ENCODE measurements at regions of chr17 and their contacts with region 1.

Region 1: DNA sequence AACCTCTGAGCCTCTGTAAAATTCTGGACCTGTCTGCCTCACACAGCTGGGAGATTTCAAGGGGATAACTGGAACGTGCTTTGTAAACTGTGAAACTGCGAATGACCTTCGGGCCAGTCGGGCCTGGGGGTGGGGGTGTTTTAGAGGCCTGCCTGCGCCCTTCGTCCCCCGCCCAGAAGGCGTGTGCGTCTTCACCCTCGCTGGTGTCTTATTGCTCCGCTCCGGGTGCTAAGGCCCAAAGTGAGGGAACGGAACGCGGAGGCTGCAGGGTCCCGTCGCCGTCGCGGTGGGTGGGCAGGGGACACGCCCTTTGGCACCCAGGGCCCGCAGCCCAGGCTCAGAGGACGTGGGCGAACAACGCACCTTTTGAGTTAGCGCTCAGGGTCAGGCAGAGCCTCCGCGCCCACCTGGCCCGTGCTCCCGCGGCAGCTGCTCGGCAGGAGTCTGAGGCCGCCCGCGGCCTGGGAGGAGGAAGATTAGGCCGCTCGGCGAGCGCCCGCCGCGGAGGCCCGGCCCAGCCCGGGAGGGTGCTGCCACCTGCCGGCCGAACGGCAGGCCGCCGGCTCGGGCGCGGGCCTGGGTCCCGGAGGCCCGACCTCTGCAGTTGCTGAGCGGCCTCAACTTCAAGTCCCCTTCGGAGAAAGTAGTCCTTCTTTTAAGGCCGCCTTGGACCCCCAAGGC is 29.7 kb downstream of the DCAKD start:
- DNase-seq: peak; percentile 91
- CTCF ChIP-seq: peak; percentile 79

Region 2: GRCh38 chr17:44804302-44805089 is 217.3 kb before region 1 on chr17:
- CTCF ChIA-PET with region 1: no interaction called
- POLR2A ChIA-PET with region 1: no interaction called
- DNase-seq: no peak
- CTCF ChIP-seq: no peak

Region 3: GRCh38 chr17:44911133-44912001 is 110.4 kb before region 1 on chr17:
- CTCF ChIA-PET with region 1: interaction called, 13 read pairs
- POLR2A ChIA-PET with region 1: no interaction called
- DNase-seq: peak; percentile 64
- CTCF ChIP-seq: peak; percentile 70

Region 4: DNA sequence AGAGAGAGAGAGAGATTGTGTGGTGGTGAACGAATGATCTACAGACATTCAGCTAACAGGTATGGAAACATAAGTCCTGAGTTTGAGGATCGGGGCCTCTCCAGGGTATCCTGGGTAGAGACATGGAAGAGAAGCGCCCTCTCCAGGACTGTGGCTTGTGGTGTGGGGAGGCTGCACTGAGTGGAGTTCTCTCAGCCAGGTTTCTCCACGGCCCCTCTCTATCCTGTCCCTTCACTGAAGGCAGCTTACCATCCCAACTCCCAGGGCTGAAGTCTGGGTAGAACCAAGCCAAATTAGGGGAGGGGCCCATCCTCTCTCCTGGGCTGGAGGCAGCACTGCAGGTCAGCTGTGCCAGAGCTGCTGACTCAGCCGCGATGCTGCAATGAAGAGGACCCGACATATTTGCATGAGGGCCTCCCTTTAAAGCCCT is 59.8 kb before region 1 on chr17:
- CTCF ChIA-PET with region 1: interaction called, 11 read pairs
- POLR2A ChIA-PET with region 1: no interaction called
- DNase-seq: no peak
- CTCF ChIP-seq: no peak

Region 5: DNA sequence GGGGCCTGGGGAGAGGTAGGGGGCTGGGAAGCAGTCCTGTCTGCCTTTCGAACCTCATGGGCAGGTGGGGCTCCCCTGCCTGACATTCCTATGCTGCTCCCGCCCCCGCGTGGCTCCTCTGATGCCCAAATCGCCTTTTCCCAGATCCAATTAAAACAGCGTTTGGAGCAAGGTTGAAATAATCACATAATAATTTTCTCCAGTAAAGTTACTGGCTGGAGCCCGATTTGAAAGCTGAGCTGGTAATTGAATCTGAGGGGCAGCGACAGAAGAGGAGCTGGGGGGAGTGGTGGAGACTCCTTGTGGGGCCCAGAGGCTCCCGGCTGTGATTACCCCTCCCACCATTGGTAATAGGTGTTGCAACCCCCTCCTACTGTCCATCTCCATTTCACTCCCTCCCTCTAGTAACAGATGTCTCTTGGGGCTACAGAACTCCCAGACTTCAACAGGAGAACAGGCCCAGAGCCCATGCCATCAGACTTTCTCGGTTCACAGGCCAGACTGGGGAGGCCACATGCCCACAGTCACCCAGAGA is 14.8 kb before region 1 on chr17:
- CTCF ChIA-PET with region 1: interaction called, 38 read pairs
- POLR2A ChIA-PET with region 1: no interaction called
- DNase-seq: no peak
- CTCF ChIP-seq: no peak

Region 6: DNA sequence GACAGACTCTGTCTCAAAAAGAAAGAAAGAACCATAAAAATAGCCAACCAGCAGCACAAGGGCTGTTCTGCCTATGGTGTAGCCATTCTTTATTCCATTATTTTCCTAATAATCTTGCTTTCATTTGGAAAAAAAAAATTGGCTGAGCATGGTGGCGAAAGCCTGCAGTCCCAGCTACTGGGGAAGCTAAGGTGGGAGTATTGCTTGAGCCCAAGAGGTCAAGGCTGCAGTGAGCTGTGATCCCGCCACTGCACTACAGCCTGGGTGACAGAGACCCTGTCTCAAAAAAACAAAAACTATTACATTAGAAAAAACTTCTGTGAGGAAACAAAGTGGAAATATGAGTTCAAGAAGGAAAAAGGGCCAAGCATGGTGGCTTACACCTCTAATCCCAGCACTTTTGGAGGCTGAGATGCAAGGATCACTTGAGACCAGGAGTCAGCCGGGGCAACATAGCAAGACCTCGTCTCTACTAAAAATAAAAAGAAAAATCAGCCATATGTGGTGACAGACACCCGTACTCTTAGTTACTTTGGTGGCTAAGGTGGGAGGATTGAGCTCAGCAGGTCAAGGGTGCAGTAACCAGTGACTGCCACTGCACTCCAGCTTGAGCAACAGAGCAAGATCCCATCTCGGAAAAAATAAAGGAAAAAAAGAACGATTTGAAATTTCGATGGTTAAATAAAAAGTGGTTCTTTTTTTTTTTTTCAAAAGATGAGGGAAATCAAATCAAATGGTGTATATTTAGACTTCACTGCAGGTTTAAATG is 27.2 kb after region 1 on chr17:
- CTCF ChIA-PET with region 1: interaction called, 11 read pairs
- POLR2A ChIA-PET with region 1: no interaction called
- DNase-seq: no peak
- CTCF ChIP-seq: no peak

Region 7: DNA sequence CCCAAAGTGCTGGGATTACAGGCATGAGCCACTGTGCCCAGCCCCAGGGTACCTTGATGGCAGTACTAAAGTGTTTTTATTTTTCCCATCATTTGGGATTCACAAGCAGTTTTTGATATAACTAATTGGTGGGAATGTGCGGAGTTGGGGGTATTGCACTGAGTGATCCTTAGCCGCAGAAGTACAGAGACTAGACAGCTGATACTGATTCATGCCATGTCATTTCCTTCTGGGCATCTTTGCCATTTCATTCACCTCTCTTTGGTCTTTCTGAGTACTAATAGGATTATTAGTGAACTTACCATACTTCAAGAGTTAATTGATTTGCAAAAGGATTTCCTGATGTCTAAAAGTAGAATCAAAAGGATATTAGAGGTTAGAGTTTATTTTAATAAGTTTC is 49.1 kb after region 1 on chr17:
- CTCF ChIA-PET with region 1: no interaction called
- POLR2A ChIA-PET with region 1: no interaction called
- DNase-seq: no peak
- CTCF ChIP-seq: no peak

Region 8: GRCh38 chr17:45098869-45099616 is 77.3 kb after region 1 on chr17:
- CTCF ChIA-PET with region 1: interaction called, 12 read pairs
- POLR2A ChIA-PET with region 1: no interaction called
- DNase-seq: peak; percentile 89
- CTCF ChIP-seq: peak; percentile 75

Measured in GM10248 (cell line).